ENCODE measurements at regions of chr6 and their contacts with region 1.

Region 1: GRCh38 chr6:33592411-33593054 is 12.5 kb upstream of the BAK1 start:
- DNase-seq: peak; percentile 41 to 73 (median 44)
- H3K4me3 ChIP-seq: peak overlapping the region; percentile 6 to 52
- H3K4me3 Mint-ChIP-seq: peak overlapping the region; percentile 67 to 91 (median 86)
- H3K27ac ChIP-seq: peak overlapping the region; percentile 17
- H3K27ac Mint-ChIP-seq: peak overlapping the region; percentile 75 to 96 (median 92)
- H3K4me1 ChIP-seq: peaks cover 14% of the 10 kb centered on the region
- H3K4me1 Mint-ChIP-seq: peaks cover 12 to 23% (median 17%) of the 10 kb centered on the region in 4 donors
- H3K27me3 ChIP-seq: no peaks in the 10 kb centered on the region
- H3K27me3 Mint-ChIP-seq: no peaks in the 10 kb centered on the region

Region 2: DNA sequence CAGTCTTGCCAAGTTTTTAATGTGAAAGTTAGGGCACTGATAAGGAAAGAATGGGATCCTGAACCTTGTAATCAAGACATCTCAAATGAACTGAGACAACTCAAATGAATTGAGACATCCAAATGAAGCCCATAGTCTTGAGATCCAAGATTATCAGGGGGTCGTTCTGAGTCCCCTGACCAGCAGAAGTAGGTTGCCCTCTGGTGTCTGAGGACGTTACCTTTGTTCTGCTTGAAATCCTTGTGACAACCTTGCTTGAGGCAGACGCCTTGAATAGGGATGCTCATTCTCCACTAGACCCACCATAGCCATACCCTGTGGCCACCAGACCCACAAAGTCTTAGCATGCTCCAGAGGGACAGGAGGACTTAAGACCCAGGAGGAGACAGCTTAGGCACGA is 100.4 kb before region 1 on chr6:
- CTCF ChIA-PET with region 1: no interaction called
- POLR2A ChIA-PET with region 1: no interaction called
- intact Hi-C with region 1: no loop called
- DNase-seq: no peak
- H3K4me3 ChIP-seq: no peak overlapping the region
- H3K4me3 Mint-ChIP-seq: no peak overlapping the region
- H3K27ac ChIP-seq: no peak overlapping the region
- H3K27ac Mint-ChIP-seq: no peak overlapping the region
- H3K4me1 ChIP-seq: no peaks in the 10 kb centered on the region
- H3K4me1 Mint-ChIP-seq: no peaks in the 10 kb centered on the region
- H3K27me3 ChIP-seq: no peaks in the 10 kb centered on the region
- H3K27me3 Mint-ChIP-seq: peaks cover 2% of the 10 kb centered on the region in 2 donors

Region 3: DNA sequence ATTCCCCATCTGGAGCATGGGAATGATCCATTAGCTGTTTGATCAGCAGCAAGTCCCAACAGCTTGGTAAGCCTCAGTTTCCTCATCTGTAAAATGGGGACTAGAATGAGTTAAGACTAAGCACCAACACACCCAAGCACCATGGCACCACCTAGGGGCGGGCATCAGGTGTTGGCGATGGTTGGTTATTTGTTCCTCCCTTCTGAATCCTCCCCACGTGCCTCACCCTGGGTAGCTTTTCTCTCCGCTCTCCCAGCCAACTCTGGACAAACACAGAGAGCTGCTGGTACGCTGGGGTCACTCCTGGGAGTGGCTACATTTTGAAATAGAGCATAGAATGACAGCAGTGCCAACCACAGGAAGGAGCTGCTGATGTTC is 15.2 kb after region 1 on chr6:
- CTCF ChIA-PET with region 1: interaction called, 46 read pairs
- POLR2A ChIA-PET with region 1: interaction called, 5 read pairs
- intact Hi-C with region 1: no loop called
- DNase-seq: peak in 4 of 5 donors; percentile 27 to 40 (median 32)
- H3K4me3 ChIP-seq: no peak overlapping the region
- H3K4me3 Mint-ChIP-seq: no peak overlapping the region
- H3K27ac ChIP-seq: no peak overlapping the region
- H3K27ac Mint-ChIP-seq: no peak overlapping the region
- H3K4me1 ChIP-seq: no peaks in the 10 kb centered on the region
- H3K4me1 Mint-ChIP-seq: no peaks in the 10 kb centered on the region
- H3K27me3 ChIP-seq: no peaks in the 10 kb centered on the region
- H3K27me3 Mint-ChIP-seq: no peaks in the 10 kb centered on the region

Region 4: GRCh38 chr6:33633462-33634158 is 41.1 kb after region 1 on chr6:
- CTCF ChIA-PET with region 1: interaction called, 10 read pairs
- POLR2A ChIA-PET with region 1: interaction called, 3 read pairs
- intact Hi-C with region 1: loop called (anchors 1 kb)
- DNase-seq: peak; percentile 50 to 57 (median 55)
- H3K4me3 ChIP-seq: peak overlapping the region in 1 of 2 donors; percentile 40
- H3K4me3 Mint-ChIP-seq: peak overlapping the region; percentile 85 to 94 (median 87)
- H3K27ac ChIP-seq: peak overlapping the region; percentile 35
- H3K27ac Mint-ChIP-seq: peak overlapping the region; percentile 84 to 93 (median 90)
- H3K4me1 ChIP-seq: peaks cover 39% of the 10 kb centered on the region
- H3K4me1 Mint-ChIP-seq: peaks cover 40 to 80% (median 58%) of the 10 kb centered on the region in 4 donors
- H3K27me3 ChIP-seq: no peaks in the 10 kb centered on the region
- H3K27me3 Mint-ChIP-seq: no peaks in the 10 kb centered on the region

Measured in CD4-positive, alpha-beta memory T cell (primary cell).